ENCODE measurements at regions of chr4 and their contacts with region 1.

Region 1: DNA sequence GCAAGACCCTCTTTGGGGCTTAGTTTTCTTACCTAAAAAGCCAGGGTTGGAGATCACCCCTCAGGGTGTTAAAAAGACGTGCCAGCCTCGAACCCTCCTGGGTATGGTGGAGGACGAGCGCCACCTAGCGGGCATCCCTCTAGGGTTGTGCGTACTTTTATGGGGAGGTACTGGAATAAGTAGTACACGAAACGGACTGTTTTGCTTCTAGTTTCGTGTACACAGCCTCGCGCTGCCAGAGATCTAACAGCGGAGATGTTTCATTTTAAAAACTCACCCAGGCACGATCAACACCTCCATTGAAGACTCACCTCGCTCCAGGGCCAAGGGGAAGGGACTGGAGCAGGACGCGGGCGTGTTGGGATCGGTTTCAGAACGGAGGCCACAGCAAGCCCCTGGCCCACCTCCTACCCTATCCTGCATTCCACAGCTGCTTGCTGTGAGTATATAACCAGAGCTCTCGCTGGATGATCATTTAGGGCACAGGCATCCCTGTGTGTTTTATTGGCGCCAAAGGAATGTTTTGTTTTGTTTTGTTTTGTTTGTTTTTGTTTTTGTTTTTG is 4.8 kb upstream of the NKX3-2 start:
- DNase-seq: peak; percentile 80
- H3K4me3 Mint-ChIP-seq: peak overlapping the region; percentile 59
- H3K27ac Mint-ChIP-seq: no peak overlapping the region
- H3K4me1 Mint-ChIP-seq: no peaks in the 10 kb centered on the region
- H3K27me3 Mint-ChIP-seq: peaks cover 31% of the 10 kb centered on the region
- CTCF ChIP-seq: peak; percentile 81

Region 2: DNA sequence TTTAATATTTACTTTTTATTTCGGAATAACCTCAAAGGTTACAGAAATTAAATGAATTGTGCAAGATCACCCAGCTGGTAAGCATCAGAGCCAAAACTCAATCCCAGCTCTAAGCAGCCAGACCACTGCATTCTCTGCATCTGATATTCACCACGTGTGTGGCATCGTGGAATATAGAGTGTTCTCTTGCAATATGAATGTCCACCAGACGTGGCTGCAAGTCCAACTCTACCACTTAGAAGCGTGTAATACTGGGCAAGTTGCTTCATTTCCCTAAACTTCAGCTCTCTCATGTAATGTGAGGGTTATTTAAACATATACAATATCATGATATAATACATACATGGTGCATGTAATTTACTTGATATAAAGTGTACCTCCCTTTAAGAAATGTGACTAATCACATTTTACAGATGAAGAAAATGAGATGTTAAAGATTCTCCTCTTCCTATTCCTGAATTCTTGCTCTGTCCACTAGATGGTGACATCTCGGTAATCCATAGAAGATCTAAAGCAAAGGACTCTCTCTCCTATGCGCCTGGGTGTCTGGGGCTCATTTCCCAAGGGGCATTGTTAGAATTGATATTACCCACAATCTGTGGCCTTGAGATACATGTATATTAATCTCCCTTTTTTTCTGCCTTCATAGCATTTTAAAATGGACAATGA is 870.0 kb before region 1 on chr4:
- CTCF ChIA-PET with region 1: no interaction called
- intact Hi-C with region 1: loop called (anchors 5 kb)
- DNase-seq: no peak
- H3K4me3 Mint-ChIP-seq: no peak overlapping the region
- H3K27ac Mint-ChIP-seq: no peak overlapping the region
- H3K4me1 Mint-ChIP-seq: no peaks in the 10 kb centered on the region
- H3K27me3 Mint-ChIP-seq: no peaks in the 10 kb centered on the region
- CTCF ChIP-seq: peak; percentile 17

Region 3: DNA sequence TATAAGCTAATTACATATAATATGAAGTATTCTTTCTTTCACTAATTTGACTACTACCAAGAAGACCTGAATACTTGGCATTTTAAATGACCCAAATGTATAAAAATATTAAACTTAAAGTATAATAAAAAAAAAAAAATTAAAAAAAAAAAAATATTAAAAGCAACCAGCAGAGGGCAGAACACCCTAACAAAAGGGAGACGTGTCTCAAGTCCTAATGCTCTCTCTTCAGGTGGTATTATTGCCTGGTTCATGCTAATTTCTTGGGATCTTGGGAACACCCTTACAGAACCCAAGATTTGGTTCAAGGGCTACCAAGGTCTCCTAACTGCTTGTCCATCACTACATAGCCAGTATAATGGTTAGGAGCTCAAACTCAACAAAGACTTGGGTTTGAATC is 819.7 kb before region 1 on chr4:
- CTCF ChIA-PET with region 1: no interaction called
- intact Hi-C with region 1: loop called (anchors 2 kb)
- DNase-seq: no peak
- H3K4me3 Mint-ChIP-seq: no peak overlapping the region
- H3K27ac Mint-ChIP-seq: no peak overlapping the region
- H3K4me1 Mint-ChIP-seq: no peaks in the 10 kb centered on the region
- H3K27me3 Mint-ChIP-seq: peaks cover 15% of the 10 kb centered on the region
- CTCF ChIP-seq: no peak

Region 4: GRCh38 chr4:12852338-12853307 is 696.4 kb before region 1 on chr4:
- CTCF ChIA-PET with region 1: no interaction called
- intact Hi-C with region 1: loop called (anchors 1 kb)
- DNase-seq: peak; percentile 1
- H3K4me3 Mint-ChIP-seq: no peak overlapping the region
- H3K27ac Mint-ChIP-seq: peak overlapping the region; percentile 70
- H3K4me1 Mint-ChIP-seq: no peaks in the 10 kb centered on the region
- H3K27me3 Mint-ChIP-seq: peaks cover 13% of the 10 kb centered on the region
- CTCF ChIP-seq: peak; percentile 19

Region 5: GRCh38 chr4:13322681-13323101 is 226.4 kb before region 1 on chr4:
- CTCF ChIA-PET with region 1: no interaction called
- intact Hi-C with region 1: no loop called
- DNase-seq: no peak
- H3K4me3 Mint-ChIP-seq: no peak overlapping the region
- H3K27ac Mint-ChIP-seq: no peak overlapping the region
- H3K4me1 Mint-ChIP-seq: no peaks in the 10 kb centered on the region
- H3K27me3 Mint-ChIP-seq: no peaks in the 10 kb centered on the region
- CTCF ChIP-seq: no peak

Region 6: DNA sequence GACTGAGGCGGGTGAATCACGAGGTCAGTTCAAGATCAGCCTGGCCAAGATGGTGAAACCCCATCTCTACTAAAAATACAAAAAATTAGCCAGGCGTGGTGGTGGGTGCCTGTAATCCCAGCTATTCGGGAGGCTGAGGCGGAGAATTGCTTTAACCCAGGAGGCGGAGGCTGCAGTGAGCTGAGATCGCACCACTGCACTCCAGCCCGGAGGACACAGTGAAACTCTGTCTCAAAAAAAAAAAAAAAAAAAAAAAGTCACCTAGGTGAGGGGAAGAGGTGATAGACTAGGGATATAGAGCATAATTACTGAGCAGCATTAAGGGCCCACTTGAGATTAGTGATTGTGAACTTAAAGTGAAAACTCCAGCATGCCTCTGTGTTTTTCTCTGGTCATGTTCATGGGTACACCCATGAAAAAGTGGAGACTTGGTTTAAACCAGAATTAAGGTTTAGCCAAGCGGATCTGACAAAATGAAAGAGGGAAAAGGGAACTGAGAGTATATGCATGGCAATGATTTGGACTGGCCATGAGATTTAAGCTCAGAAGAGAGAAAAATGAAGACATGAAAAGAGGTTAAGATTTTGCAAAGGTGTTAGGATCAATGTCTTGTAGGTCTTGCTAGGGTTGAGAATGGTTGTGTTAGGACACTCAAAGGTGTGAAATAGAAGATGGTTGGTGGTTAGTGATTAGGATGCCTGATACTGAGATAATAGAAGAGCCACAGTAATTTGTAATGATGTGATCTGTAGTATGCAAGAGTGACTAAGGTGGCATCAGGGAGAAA is 169.9 kb before region 1 on chr4:
- CTCF ChIA-PET with region 1: no interaction called
- intact Hi-C with region 1: no loop called
- DNase-seq: no peak
- H3K4me3 Mint-ChIP-seq: no peak overlapping the region
- H3K27ac Mint-ChIP-seq: no peak overlapping the region
- H3K4me1 Mint-ChIP-seq: no peaks in the 10 kb centered on the region
- H3K27me3 Mint-ChIP-seq: no peaks in the 10 kb centered on the region
- CTCF ChIP-seq: no peak

Region 7: GRCh38 chr4:13484122-13484748 is 64.8 kb before region 1 on chr4 and contains the start of gene RAB28:
- CTCF ChIA-PET with region 1: no interaction called
- intact Hi-C with region 1: loop called (anchors 5 kb)
- DNase-seq: peak; percentile 90
- H3K4me3 Mint-ChIP-seq: peak within 1 kb of the TSS; percentile 87
- H3K27ac Mint-ChIP-seq: peak within 1 kb of the TSS; percentile 97
- H3K4me1 Mint-ChIP-seq: peaks cover 9% of the 10 kb centered on the region
- H3K27me3 Mint-ChIP-seq: peaks cover 9% of the 10 kb centered on the region
- CTCF ChIP-seq: no peak
- total RNA-seq, gene RAB28: 10.6 and 11.3 TPM in 2 replicates

Region 8: DNA sequence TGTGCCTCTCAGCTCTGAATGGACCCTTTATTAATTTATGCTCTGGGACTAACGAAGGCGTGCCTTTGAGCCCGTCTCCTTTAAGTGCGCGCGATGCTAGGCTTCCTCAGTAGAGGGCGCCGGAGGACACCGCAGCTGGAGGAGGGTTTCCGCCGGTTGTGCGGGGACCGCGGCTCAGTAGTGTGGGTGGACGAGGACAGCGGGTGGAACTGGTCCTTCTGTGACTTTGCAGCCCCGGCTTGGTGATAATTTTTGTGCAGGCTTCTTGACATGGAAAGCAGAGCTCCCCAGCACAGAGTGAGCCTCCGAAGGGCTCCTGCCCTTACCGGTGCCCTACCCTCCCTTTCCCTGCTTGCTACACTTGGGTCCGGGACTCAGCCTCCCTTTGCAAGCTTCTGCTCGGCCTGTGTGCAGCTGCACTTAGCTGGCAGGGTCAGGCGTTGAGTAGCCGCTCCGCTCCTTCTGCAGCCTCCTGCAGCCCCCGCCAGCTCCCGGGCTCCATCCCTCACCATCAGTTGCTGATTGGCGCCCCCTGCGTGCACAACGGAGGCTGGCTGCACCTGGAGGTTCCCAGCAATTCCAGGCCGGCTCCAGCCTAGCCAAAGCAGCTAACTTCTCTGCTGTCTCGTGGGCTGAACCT is 105.2 kb after region 1 on chr4:
- CTCF ChIA-PET with region 1: no interaction called
- intact Hi-C with region 1: no loop called
- DNase-seq: peak; percentile 82
- H3K4me3 Mint-ChIP-seq: peak overlapping the region; percentile 68
- H3K27ac Mint-ChIP-seq: no peak overlapping the region
- H3K4me1 Mint-ChIP-seq: peaks cover 12% of the 10 kb centered on the region
- H3K27me3 Mint-ChIP-seq: no peaks in the 10 kb centered on the region
- CTCF ChIP-seq: peak; percentile 45

Region 9: GRCh38 chr4:13815231-13815630 is 266.2 kb after region 1 on chr4:
- CTCF ChIA-PET with region 1: no interaction called
- intact Hi-C with region 1: no loop called
- DNase-seq: no peak
- H3K4me3 Mint-ChIP-seq: no peak overlapping the region
- H3K27ac Mint-ChIP-seq: no peak overlapping the region
- H3K4me1 Mint-ChIP-seq: no peaks in the 10 kb centered on the region
- H3K27me3 Mint-ChIP-seq: no peaks in the 10 kb centered on the region
- CTCF ChIP-seq: no peak